PC-3 (cell line): ENCODE measurements at regions of chr5 and their contacts with region 1.

Region 1: GRCh38 chr5:134784241-134784920 is 25.8 kb downstream of the DDX46 start:
- DNase-seq: no peak
- ATAC-seq: no peak
- H3K4me3 ChIP-seq: no peak overlapping the region
- H3K27ac ChIP-seq: no peak overlapping the region
- H3K4me1 ChIP-seq: no peaks in the 10 kb centered on the region
- H3K27me3 ChIP-seq: no peaks in the 10 kb centered on the region
- CTCF ChIP-seq: peak; percentile 38; the same call in 1 of the 2 replicates

Region 2: GRCh38 chr5:134738963-134739661 is 45.3 kb before region 1 on chr5:
- CTCF ChIA-PET with region 1: no interaction called
- POLR2A ChIA-PET with region 1: no interaction called
- intact Hi-C with region 1: no loop called
- DNase-seq: peak; percentile 40
- ATAC-seq: peak; percentile 58
- H3K4me3 ChIP-seq: peak overlapping the region; percentile 94
- H3K27ac ChIP-seq: no peak overlapping the region
- H3K4me1 ChIP-seq: peaks cover 8% of the 10 kb centered on the region
- H3K27me3 ChIP-seq: no peaks in the 10 kb centered on the region
- CTCF ChIP-seq: 0 out of 2 replicates have a peak, but pooled peaks have one; percentile 30

Region 3: GRCh38 chr5:134851307-134851923 is 67.0 kb after region 1 on chr5:
- CTCF ChIA-PET with region 1: no interaction called
- POLR2A ChIA-PET with region 1: no interaction called
- intact Hi-C with region 1: loop called (anchors 2 kb)
- DNase-seq: peak; percentile 56
- ATAC-seq: peak; percentile 58
- H3K4me3 ChIP-seq: no peak overlapping the region
- H3K27ac ChIP-seq: no peak overlapping the region
- H3K4me1 ChIP-seq: peaks cover 9% of the 10 kb centered on the region
- H3K27me3 ChIP-seq: no peaks in the 10 kb centered on the region
- CTCF ChIP-seq: peak; percentile 63